ENCODE measurements at regions of chr19 and their contacts with region 1.

Region 1: GRCh38 chr19:3544742-3545668 is 6.0 kb downstream of the TEKTIP1 start:
- DNase-seq: peak; percentile 43
- H3K27ac ChIP-seq: peak overlapping the region; percentile 64
- CTCF ChIP-seq: peak; percentile 93

Region 2: DNA sequence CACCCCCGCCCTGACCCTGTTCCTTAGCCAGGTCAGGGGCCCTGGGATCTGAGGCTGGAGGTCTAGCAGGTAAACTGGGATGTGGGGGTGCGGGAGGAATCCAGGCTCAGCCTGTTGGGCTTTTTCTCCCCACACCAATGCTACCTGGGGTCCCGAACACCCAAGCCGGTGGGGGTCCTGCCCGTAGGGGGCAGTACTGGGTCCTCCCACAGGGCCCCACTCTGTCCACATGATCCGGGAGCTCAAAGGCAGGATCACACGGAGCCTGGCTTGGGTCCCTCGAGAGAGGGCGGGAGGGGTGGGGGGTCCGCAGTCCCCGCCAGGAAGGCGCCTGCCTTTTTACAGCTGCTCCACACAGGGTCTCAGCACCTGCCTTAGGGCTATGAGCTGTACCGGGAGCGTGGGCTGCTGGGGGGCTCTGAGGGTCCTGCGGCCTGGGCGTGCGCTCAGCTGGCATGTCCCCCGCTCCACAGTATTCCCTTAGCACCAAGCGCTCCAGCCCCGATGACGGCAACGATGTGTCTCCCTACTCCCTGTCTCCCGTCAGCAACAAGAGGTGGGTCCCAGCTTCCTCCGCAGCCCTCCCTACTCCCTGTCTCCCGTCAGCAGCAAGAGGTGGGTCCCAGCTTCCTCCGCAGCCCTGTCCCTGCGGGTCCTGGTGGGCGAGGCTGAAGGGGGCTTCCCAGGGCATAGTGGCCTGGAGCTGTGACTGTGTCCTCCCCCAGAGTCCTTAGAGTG is 18.3 kb before region 1 on chr19:
- CTCF ChIA-PET with region 1: no interaction called
- POLR2A ChIA-PET with region 1: no interaction called
- DNase-seq: no peak
- H3K27ac ChIP-seq: no peak overlapping the region
- CTCF ChIP-seq: no peak

Region 3: GRCh38 chr19:3557461-3558248 is 12.7 kb after region 1 on chr19 and contains the start of gene MFSD12:
- CTCF ChIA-PET with region 1: interaction called, 14 read pairs
- POLR2A ChIA-PET with region 1: no interaction called
- DNase-seq: peak; percentile 95
- H3K27ac ChIP-seq: peak within 1 kb of the TSS; percentile 87
- CTCF ChIP-seq: no peak

Measured in RWPE1 (cell line).